Activated CD4-positive, alpha-beta memory T cell treated with anti-CD3 and anti-CD28 coated beads for 36 hours (primary cell): ENCODE measurements at regions of chr6 and their contacts with region 1.

Region 1: GRCh38 chr6:39182604-39183003 is 46.7 kb downstream of the KCNK5 start:
- DNase-seq: no peak
- H3K4me3 Mint-ChIP-seq: no peak overlapping the region
- H3K27ac Mint-ChIP-seq: no peak overlapping the region
- H3K4me1 Mint-ChIP-seq: no peaks in the 10 kb centered on the region
- H3K27me3 Mint-ChIP-seq: no peaks in the 10 kb centered on the region

Region 2: GRCh38 chr6:39166189-39166911 is 16.3 kb before region 1 on chr6:
- CTCF ChIA-PET with region 1: interaction called, 13 read pairs
- POLR2A ChIA-PET with region 1: no interaction called
- intact Hi-C with region 1: no loop called
- DNase-seq: peak; percentile 90
- H3K4me3 Mint-ChIP-seq: no peak overlapping the region
- H3K27ac Mint-ChIP-seq: no peak overlapping the region
- H3K4me1 Mint-ChIP-seq: peaks cover 4% of the 10 kb centered on the region
- H3K27me3 Mint-ChIP-seq: no peaks in the 10 kb centered on the region